ENCODE measurements at regions of chr7 and their contacts with region 1.

Region 1: GRCh38 chr7:116290740-116291139 is 80.4 kb downstream of the TES start:
- DNase-seq: no peak
- ATAC-seq: peak; percentile 60; the same call in 1 of the 2 replicates
- H3K4me3 ChIP-seq: no peak overlapping the region
- H3K27ac ChIP-seq: peak overlapping the region; percentile 71
- H3K4me1 ChIP-seq: peaks cover 8% of the 10 kb centered on the region
- H3K27me3 ChIP-seq: no peaks in the 10 kb centered on the region
- CTCF ChIP-seq: peak; percentile 30

Region 2: GRCh38 chr7:116279217-116279616 is 11.5 kb before region 1 on chr7:
- CTCF ChIA-PET with region 1: no interaction called
- POLR2A ChIA-PET with region 1: no interaction called
- in situ Hi-C with region 1: no loop called
- intact Hi-C with region 1: no loop called
- DNase-seq: no peak
- ATAC-seq: no peak
- H3K4me3 ChIP-seq: no peak overlapping the region
- H3K27ac ChIP-seq: peak overlapping the region; percentile 76; the same call in 1 of the 2 replicates
- H3K4me1 ChIP-seq: no peaks in the 10 kb centered on the region; the same call in 1 of the 2 replicates
- H3K27me3 ChIP-seq: no peaks in the 10 kb centered on the region
- CTCF ChIP-seq: no peak

Region 3: DNA sequence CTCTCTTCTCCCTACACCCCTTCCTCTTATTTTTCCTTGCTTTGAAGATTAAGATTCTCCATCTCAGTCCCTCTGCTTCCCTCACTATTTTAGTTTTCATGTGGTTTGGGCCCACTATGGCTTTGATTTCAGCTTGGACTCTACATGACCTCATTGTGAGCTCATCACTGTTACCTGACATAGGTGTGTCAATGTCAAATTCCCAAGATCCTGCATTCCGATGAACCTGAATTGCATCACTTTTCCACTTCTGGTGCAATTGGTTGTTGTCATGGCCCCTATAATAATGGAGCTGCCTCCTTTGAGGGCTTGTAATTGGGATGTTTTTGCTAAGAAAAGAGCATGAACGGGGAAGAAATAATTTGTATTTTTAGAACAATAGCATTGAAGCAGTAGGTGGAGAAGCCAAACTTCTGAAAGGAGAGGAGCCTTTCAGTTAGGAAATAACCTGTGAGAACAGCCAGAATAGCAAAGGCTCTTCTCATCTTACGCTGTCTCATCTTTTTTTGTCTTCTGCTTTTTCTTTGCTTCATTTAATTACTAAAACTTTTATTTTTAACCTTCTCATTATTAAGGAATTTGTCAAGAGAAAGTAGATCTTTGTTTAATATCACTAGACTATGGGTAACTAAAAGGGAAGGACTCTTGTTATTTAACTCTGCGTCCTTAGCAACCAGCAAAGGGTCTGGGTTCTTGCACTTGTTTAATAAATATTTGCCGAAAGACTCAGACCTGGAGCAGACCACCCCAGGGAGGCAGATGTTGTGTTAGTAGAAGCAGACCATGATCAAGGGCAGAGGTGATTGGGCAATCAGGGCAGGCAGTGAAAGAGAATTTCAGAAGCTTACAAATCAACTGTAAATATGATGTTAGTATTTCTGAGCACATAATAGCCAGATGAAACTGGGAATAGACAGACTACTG is 15.0 kb after region 1 on chr7:
- CTCF ChIA-PET with region 1: no interaction called
- POLR2A ChIA-PET with region 1: no interaction called
- in situ Hi-C with region 1: no loop called
- intact Hi-C with region 1: loop called (anchors 1 kb)
- DNase-seq: no peak
- ATAC-seq: no peak
- H3K4me3 ChIP-seq: no peak overlapping the region
- H3K27ac ChIP-seq: peak overlapping the region; percentile 48; the same call in 1 of the 2 replicates
- H3K4me1 ChIP-seq: no peaks in the 10 kb centered on the region
- H3K27me3 ChIP-seq: no peaks in the 10 kb centered on the region
- CTCF ChIP-seq: no peak

Measured in Panc1 (cell line).